ENCODE measurements at regions of chr18 and their contacts with region 1.

Region 1: GRCh38 chr18:21955757-21956652 is 213.4 kb upstream of the GATA6 start:
- DNase-seq: peak; percentile 93
- H3K4me3 Mint-ChIP-seq: no peak overlapping the region
- H3K27ac Mint-ChIP-seq: no peak overlapping the region
- H3K4me1 Mint-ChIP-seq: no peaks in the 10 kb centered on the region
- H3K27me3 Mint-ChIP-seq: peaks cover 16% of the 10 kb centered on the region

Region 2: GRCh38 chr18:21194871-21195771 is 760.9 kb before region 1 on chr18:
- intact Hi-C with region 1: loop called (anchors 1 kb)
- DNase-seq: no peak
- H3K4me3 Mint-ChIP-seq: no peak overlapping the region
- H3K27ac Mint-ChIP-seq: no peak overlapping the region
- H3K4me1 Mint-ChIP-seq: no peaks in the 10 kb centered on the region
- H3K27me3 Mint-ChIP-seq: peaks cover 12% of the 10 kb centered on the region

Region 3: GRCh38 chr18:21489119-21489750 is 466.8 kb before region 1 on chr18:
- intact Hi-C with region 1: loop called (anchors 1 kb)
- DNase-seq: peak; percentile 81
- H3K4me3 Mint-ChIP-seq: no peak overlapping the region
- H3K27ac Mint-ChIP-seq: no peak overlapping the region
- H3K4me1 Mint-ChIP-seq: no peaks in the 10 kb centered on the region
- H3K27me3 Mint-ChIP-seq: peaks cover 9% of the 10 kb centered on the region

Region 4: GRCh38 chr18:21897811-21898210 is 58.2 kb before region 1 on chr18:
- intact Hi-C with region 1: loop called (anchors 1 kb)
- DNase-seq: peak; percentile 75
- H3K4me3 Mint-ChIP-seq: no peak overlapping the region
- H3K27ac Mint-ChIP-seq: no peak overlapping the region
- H3K4me1 Mint-ChIP-seq: peaks cover 5% of the 10 kb centered on the region
- H3K27me3 Mint-ChIP-seq: peaks cover 2% of the 10 kb centered on the region

Region 5: GRCh38 chr18:22005191-22005841 is 49.3 kb after region 1 on chr18:
- intact Hi-C with region 1: no loop called
- DNase-seq: no peak
- H3K4me3 Mint-ChIP-seq: no peak overlapping the region
- H3K27ac Mint-ChIP-seq: no peak overlapping the region
- H3K4me1 Mint-ChIP-seq: no peaks in the 10 kb centered on the region
- H3K27me3 Mint-ChIP-seq: no peaks in the 10 kb centered on the region

Measured in activated CD4-positive, alpha-beta T cell treated with anti-CD3 and anti-CD28 coated beads, Interleukin-2, amount 10 ng/mL, durations not matched to agents 24 days and 14 days (primary cell).